ENCODE measurements at regions of chr10 and their contacts with region 1.

Region 1: DNA sequence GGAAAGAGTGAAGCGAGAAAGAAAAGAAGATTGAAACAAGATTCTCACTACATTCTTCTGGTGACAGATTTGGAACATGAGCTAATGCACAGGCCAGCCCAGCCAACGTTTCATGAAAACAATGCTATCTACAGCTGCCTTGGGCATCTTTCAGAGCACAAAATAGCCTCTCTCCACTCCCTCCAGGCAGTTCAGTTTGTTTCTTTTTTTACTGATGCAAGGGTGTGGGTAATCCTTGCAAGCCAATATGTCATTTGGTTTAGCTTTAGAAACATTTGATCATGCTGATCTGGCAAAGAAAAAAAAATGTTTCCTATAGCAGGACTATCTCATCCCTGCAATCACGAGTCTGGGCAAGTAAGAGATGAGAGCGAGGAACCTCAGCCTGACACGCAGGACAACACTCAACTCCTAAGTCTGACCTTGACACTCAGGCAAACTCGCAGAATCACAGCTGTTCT is 35.9 kb downstream of the SVIL start:
- DNase-seq: peak; percentile 34 to 69 (median 61)
- ATAC-seq: peak; percentile 80 to 83
- H3K4me3 ChIP-seq: no peak overlapping the region
- H3K27ac ChIP-seq: peak overlapping the region; percentile 97
- H3K4me1 ChIP-seq: peaks cover 10% of the 10 kb centered on the region
- H3K27me3 ChIP-seq: no peaks in the 10 kb centered on the region

Region 2: GRCh38 chr10:29482591-29483431 is 116.1 kb before region 1 on chr10:
- intact Hi-C with region 1: no loop called
- DNase-seq: peak in 1 of 3 donors; percentile 70
- ATAC-seq: peak; percentile 66
- H3K4me3 ChIP-seq: no peak overlapping the region
- H3K27ac ChIP-seq: no peak overlapping the region
- H3K4me1 ChIP-seq: peaks cover 2% of the 10 kb centered on the region
- H3K27me3 ChIP-seq: no peaks in the 10 kb centered on the region

Region 3: GRCh38 chr10:29841724-29842649 is 243.1 kb after region 1 on chr10:
- intact Hi-C with region 1: loop called in 1 of 4 experiments (anchors 10 kb)
- DNase-seq: peak; percentile 60 to 84 (median 74)
- ATAC-seq: peak; percentile 87
- H3K4me3 ChIP-seq: no peak overlapping the region
- H3K27ac ChIP-seq: peak overlapping the region; percentile 98
- H3K4me1 ChIP-seq: peaks cover 4% of the 10 kb centered on the region
- H3K27me3 ChIP-seq: no peaks in the 10 kb centered on the region